GM12878 (cell line): ENCODE measurements at regions of chr18 and their contacts with region 1.

Region 1: DNA sequence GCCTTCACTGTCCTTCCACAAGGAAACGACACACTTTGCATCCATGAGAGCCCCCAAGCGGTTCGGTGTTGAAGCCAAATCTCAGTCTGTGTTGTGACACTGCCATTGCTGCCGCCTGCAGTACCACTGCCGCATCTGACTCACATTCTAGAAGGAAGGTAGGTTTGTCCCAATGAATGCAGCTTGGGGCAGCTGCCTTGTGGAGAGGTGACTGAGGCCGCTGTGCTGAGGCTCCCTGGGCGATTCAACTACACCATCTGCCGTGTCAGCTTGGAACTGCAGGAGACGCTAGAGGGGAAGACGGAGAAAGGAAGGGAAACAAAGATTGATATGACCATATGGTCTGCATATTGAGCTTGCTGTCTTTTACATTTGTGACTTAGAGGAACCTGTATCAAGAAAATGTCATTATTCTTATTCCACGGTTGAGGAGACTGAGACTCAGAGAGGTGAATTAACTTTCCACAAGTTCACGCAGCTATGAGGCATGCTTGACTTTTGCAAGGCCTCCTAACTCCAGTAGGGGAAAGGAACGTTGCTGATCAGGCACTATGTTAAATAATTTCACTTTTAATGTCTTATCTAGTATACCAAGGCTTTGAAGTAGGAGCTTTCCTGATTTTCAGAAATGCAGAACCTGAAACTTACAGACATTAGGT is 43.5 kb upstream of the LMAN1 start:
- DNase-seq: peak; percentile 40
- ATAC-seq: peak; percentile 100
- H3K4me3 ChIP-seq: no peak overlapping the region
- H3K27ac ChIP-seq: no peak overlapping the region
- H3K4me1 ChIP-seq: no peaks in the 10 kb centered on the region
- H3K27me3 ChIP-seq: no peaks in the 10 kb centered on the region
- CTCF ChIP-seq: peak; percentile 89 to 97 (median 96)
- EP300 ChIP-seq: no peak
- POLR2A ChIP-seq: no peak
- RAD21 ChIP-seq: peak; percentile 97

Region 2: DNA sequence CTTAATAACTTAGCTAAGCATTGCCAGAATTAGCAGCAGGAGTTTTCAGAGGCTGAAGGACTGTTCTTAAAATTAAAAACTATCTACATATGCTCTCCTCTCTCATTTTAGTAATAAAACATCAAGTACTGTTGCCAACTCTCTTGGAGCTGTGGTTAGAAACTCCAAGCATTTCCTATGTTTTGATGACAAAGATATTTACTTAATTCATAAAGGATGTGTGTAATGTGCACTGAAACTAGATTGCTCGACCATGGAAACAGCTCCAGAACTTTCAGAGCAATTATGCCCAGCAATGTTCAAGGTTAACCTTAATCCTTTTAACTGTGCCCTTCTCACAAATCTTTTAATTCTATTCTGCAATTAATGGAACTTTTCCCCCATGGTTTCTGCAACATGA is 174.2 kb before region 1 on chr18:
- CTCF ChIA-PET with region 1: interaction called, 23 read pairs
- POLR2A ChIA-PET with region 1: no interaction called
- RAD21 ChIA-PET with region 1: no interaction called
- SMC1A ChIA-PET with region 1: interaction called, 5 read pairs
- in situ Hi-C with region 1: no loop called
- intact Hi-C with region 1: no loop called
- DNase-seq: no peak
- ATAC-seq: no peak
- H3K4me3 ChIP-seq: no peak overlapping the region
- H3K27ac ChIP-seq: no peak overlapping the region
- H3K4me1 ChIP-seq: no peaks in the 10 kb centered on the region
- H3K27me3 ChIP-seq: peaks cover 0 to 6% of the 10 kb centered on the region in 2 experiments; a peak in 1 of 4 replicates
- CTCF ChIP-seq: no peak
- EP300 ChIP-seq: no peak
- POLR2A ChIP-seq: no peak
- RAD21 ChIP-seq: no peak

Region 3: GRCh38 chr18:59303006-59303405 is 99.6 kb before region 1 on chr18:
- CTCF ChIA-PET with region 1: interaction called, 165 read pairs
- POLR2A ChIA-PET with region 1: no interaction called
- RAD21 ChIA-PET with region 1: interaction called, 46 read pairs
- SMC1A ChIA-PET with region 1: interaction called, 72 read pairs
- in situ Hi-C with region 1: no loop called
- intact Hi-C with region 1: loop called (anchors 2 kb)
- DNase-seq: no peak
- ATAC-seq: no peak
- H3K4me3 ChIP-seq: no peak overlapping the region
- H3K27ac ChIP-seq: no peak overlapping the region
- H3K4me1 ChIP-seq: no peaks in the 10 kb centered on the region
- H3K27me3 ChIP-seq: peaks cover 3 to 7% of the 10 kb centered on the region in 2 experiments; a peak in 3 of 4 replicates
- CTCF ChIP-seq: no peak
- EP300 ChIP-seq: no peak
- POLR2A ChIP-seq: no peak
- RAD21 ChIP-seq: no peak

Region 4: GRCh38 chr18:59353079-59353680 is 49.4 kb before region 1 on chr18:
- CTCF ChIA-PET with region 1: interaction called, 24 read pairs
- POLR2A ChIA-PET with region 1: no interaction called
- RAD21 ChIA-PET with region 1: interaction called, 5 read pairs
- SMC1A ChIA-PET with region 1: interaction called, 12 read pairs
- in situ Hi-C with region 1: no loop called
- intact Hi-C with region 1: no loop called
- DNase-seq: no peak
- ATAC-seq: no peak
- H3K4me3 ChIP-seq: no peak overlapping the region
- H3K27ac ChIP-seq: no peak overlapping the region
- H3K4me1 ChIP-seq: peaks cover 8% of the 10 kb centered on the region
- H3K27me3 ChIP-seq: no peaks in the 10 kb centered on the region
- CTCF ChIP-seq: no peak
- EP300 ChIP-seq: no peak
- POLR2A ChIP-seq: no peak
- RAD21 ChIP-seq: no peak

Region 5: GRCh38 chr18:59387687-59388565 is 14.6 kb before region 1 on chr18:
- CTCF ChIA-PET with region 1: interaction called, 18 read pairs
- POLR2A ChIA-PET with region 1: no interaction called
- RAD21 ChIA-PET with region 1: no interaction called
- SMC1A ChIA-PET with region 1: interaction called, 12 read pairs
- in situ Hi-C with region 1: no loop called
- intact Hi-C with region 1: no loop called
- DNase-seq: no peak
- ATAC-seq: no peak
- H3K4me3 ChIP-seq: no peak overlapping the region
- H3K27ac ChIP-seq: no peak overlapping the region
- H3K4me1 ChIP-seq: no peaks in the 10 kb centered on the region
- H3K27me3 ChIP-seq: no peaks in the 10 kb centered on the region; a peak in 1 of 4 replicates
- CTCF ChIP-seq: no peak
- EP300 ChIP-seq: no peak
- POLR2A ChIP-seq: no peak
- RAD21 ChIP-seq: no peak

Region 6: GRCh38 chr18:59478591-59478990 is 76.0 kb after region 1 on chr18:
- CTCF ChIA-PET with region 1: no interaction called
- POLR2A ChIA-PET with region 1: no interaction called
- RAD21 ChIA-PET with region 1: no interaction called
- SMC1A ChIA-PET with region 1: no interaction called
- in situ Hi-C with region 1: no loop called
- intact Hi-C with region 1: no loop called
- DNase-seq: no peak
- ATAC-seq: no peak
- H3K4me3 ChIP-seq: no peak overlapping the region
- H3K27ac ChIP-seq: no peak overlapping the region
- H3K4me1 ChIP-seq: no peaks in the 10 kb centered on the region
- H3K27me3 ChIP-seq: no peaks in the 10 kb centered on the region
- CTCF ChIP-seq: no peak
- EP300 ChIP-seq: no peak
- POLR2A ChIP-seq: no peak
- RAD21 ChIP-seq: no peak